ENCODE measurements at regions of chr17 and their contacts with region 1.

Region 1: GRCh38 chr17:74748529-74749365 is at the start of gene NHERF1:
- DNase-seq: peak; percentile 61
- ATAC-seq: peak; percentile 86
- H3K4me3 Mint-ChIP-seq: peak within 1 kb of the TSS; percentile 92
- H3K27ac Mint-ChIP-seq: peak within 1 kb of the TSS; percentile 57
- H3K4me1 Mint-ChIP-seq: peaks cover 64% of the 10 kb centered on the region
- H3K27me3 Mint-ChIP-seq: peaks cover 3% of the 10 kb centered on the region; the same call in 1 of the 2 replicates
- CTCF ChIP-seq: no peak
- total RNA-seq, gene NHERF1: 86.9 to 111 TPM (median 97.1 TPM) in 3 replicates

Region 2: GRCh38 chr17:74566132-74566753 is 182.5 kb before region 1 on chr17:
- CTCF ChIA-PET with region 1: interaction called, 15 read pairs
- POLR2A ChIA-PET with region 1: no interaction called
- DNase-seq: peak; percentile 82
- ATAC-seq: peak; percentile 96
- H3K4me3 Mint-ChIP-seq: no peak overlapping the region
- H3K27ac Mint-ChIP-seq: no peak overlapping the region
- H3K4me1 Mint-ChIP-seq: peaks cover 7% of the 10 kb centered on the region; the same call in 1 of the 2 replicates
- H3K27me3 Mint-ChIP-seq: peaks cover 18% of the 10 kb centered on the region
- CTCF ChIP-seq: peak; percentile 77

Region 3: DNA sequence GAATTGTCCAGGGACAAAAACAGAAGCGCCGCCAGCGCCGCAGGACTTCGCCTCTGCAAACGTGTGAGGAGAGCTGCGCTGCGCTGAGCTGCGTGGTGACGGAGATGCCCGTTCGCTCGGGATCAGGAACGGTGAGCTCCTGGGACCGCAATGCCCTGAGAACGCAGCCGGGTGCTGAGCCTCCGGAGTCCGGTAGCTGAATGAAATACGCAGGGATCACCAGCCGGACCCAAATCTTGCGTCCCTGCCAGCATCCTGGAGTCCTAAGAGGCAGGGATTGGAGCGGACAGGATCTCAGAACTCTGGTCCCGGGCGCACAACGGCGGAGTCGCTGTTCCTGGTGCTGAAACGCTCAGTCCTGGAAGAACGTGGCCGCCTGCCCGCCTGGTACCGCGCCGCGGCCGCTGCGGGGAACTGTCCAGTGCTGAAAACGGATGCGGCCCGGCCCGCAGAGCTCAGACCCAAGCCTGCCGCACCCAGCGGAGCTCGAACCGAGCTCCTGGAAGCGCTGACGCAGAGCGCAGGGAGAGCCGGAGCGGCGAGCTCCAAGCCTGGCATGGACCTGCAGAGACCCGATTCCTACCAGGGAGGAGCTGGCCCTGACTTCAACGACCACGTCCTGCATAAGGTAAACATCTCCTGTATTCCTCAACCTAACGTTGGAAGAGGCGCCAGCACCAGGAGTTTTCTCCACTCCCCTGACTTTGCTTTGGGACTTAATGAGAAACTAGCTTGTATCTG is 77.5 kb before region 1 on chr17:
- CTCF ChIA-PET with region 1: interaction called, 17 read pairs
- POLR2A ChIA-PET with region 1: interaction called, 3 read pairs
- DNase-seq: peak; percentile 97
- ATAC-seq: peak; percentile 95
- H3K4me3 Mint-ChIP-seq: peak overlapping the region; percentile 28
- H3K27ac Mint-ChIP-seq: no peak overlapping the region
- H3K4me1 Mint-ChIP-seq: peaks cover 5% of the 10 kb centered on the region
- H3K27me3 Mint-ChIP-seq: peaks cover 76% of the 10 kb centered on the region
- CTCF ChIP-seq: no peak

Region 4: DNA sequence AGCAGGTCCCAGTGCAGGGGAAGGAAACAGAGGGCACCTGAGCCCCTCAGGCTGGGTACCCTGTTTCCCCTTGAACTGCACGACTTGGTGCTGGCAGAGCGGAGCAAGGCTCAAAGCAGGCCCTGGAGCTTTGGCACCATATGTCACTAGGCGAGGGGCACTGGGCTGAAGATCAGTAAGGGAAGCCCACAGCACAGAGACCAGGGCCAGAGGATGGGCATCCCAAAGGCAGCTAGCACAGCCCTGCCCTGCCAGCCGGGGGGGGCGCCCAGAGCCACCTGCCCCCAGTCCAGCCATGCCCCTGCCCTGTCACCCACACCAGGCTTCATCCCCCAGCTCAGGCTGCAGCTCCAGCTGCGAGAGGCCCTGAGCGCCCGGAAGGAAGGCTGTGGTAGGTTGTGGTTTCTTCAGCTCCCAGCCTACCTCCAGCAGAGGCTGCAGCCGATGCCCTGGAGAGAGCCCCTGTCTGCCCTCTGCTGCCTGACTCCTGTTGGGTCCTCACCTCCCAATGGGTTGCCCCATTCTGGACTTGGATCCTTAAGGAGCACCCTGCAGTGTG is 10.6 kb after region 1 on chr17:
- CTCF ChIA-PET with region 1: interaction called, 115 read pairs
- POLR2A ChIA-PET with region 1: interaction called, 8 read pairs
- DNase-seq: no peak
- ATAC-seq: no peak
- H3K4me3 Mint-ChIP-seq: no peak overlapping the region
- H3K27ac Mint-ChIP-seq: peak overlapping the region; percentile 89
- H3K4me1 Mint-ChIP-seq: peaks cover 52% of the 10 kb centered on the region
- H3K27me3 Mint-ChIP-seq: no peaks in the 10 kb centered on the region
- CTCF ChIP-seq: no peak

Region 5: DNA sequence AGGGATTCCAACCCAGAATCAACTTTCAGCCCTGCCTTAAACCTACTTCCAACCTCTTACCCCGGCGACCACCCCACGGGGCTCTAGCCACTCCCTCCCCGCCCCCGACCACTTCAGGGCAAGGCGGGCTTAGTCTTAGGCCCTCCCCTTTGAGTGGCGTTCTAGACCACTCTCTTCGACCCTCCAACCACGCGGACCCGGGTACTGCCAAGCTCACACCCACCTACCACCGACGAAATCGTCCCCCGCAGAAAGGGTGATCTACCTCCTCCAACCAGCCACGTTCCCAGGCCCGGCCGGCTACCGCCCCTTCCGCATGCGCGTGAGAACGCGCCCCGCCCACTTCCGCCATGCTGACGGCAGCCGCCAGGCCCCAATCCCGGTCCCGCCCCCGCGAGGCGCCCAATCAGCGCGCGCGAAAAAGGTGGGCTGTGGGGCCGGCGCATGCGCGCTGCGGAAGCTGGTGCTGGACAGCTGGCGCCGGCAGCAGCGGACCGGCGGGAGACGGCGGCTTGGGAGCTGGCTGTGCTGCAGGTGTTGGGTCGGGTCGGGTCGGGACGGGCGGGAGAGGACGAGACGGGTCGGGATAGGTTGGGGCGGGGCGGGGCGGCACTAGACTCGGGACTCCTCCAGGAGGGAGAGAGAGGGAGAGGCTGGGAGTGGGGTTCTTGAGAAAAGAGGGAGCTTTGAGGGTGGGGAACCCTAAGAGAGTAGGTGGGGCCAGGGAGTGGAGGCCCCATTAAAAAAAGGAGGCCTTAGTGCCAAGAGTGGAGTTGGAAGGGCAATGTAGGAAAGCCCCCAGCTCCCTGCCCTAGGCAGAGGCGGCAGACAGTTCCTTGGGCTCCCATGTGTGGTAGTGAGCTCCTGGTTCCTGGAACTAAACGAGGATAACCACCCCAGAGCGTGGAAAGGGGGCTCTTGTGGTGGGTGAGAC is 27.6 kb after region 1 on chr17 and contains the start of gene NAT9:
- CTCF ChIA-PET with region 1: interaction called, 262 read pairs
- POLR2A ChIA-PET with region 1: interaction called, 14 read pairs
- DNase-seq: peak; percentile 99
- ATAC-seq: peak; percentile 96
- H3K4me3 Mint-ChIP-seq: peak within 1 kb of the TSS; percentile 91
- H3K27ac Mint-ChIP-seq: peak within 1 kb of the TSS; percentile 97
- H3K4me1 Mint-ChIP-seq: peaks cover 15% of the 10 kb centered on the region
- H3K27me3 Mint-ChIP-seq: no peaks in the 10 kb centered on the region
- CTCF ChIP-seq: no peak
- total RNA-seq, gene NAT9: 66.0 to 71.2 TPM (median 67.1 TPM) in 3 replicates

Region 6: GRCh38 chr17:74790161-74791054 is 41.7 kb after region 1 on chr17:
- CTCF ChIA-PET with region 1: interaction called, 39 read pairs
- POLR2A ChIA-PET with region 1: no interaction called
- DNase-seq: no peak
- ATAC-seq: no peak
- H3K4me3 Mint-ChIP-seq: no peak overlapping the region
- H3K27ac Mint-ChIP-seq: peak overlapping the region; percentile 80; the same call in 1 of the 2 replicates
- H3K4me1 Mint-ChIP-seq: peaks cover 6% of the 10 kb centered on the region
- H3K27me3 Mint-ChIP-seq: no peaks in the 10 kb centered on the region
- CTCF ChIP-seq: no peak

Region 7: DNA sequence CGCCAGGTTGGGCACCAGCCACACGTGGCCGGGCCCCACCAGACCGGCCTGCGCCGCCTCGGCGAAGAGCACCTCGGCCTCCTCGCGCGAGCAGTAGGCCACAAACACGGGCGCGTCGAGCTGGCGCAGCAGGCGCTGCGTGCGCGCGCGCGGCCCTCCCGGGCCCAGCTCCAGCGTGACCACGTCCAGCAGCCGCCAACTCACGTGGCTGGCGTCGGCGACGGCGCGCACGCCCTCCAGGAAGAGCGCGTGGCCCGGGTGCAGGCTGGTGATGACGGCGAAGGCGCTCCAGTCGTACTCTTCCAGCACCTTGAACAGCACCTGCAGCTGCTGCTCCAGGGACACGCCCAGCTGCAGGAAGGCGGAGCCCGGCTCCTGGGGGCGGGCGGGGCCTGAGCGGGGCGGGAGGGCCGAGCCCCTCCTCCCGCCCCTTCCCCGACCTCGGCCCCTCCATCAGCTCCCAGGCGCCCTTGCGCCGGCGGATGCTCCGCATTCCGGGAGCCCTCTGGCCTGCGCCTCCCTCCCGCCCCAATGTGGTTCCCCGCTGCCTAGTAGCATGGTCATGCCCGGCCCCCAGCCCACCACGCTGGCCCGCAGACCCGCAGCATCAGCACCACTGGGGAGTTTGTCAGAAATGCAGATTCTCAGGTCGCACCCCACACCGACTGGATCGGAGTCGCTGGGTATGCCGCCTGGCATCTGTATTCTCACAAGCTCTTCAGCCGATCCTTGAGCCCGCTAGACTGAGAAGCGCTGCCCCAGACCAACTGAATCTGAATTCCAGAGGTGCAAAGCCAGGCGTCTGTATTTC is 103.7 kb after region 1 on chr17:
- CTCF ChIA-PET with region 1: interaction called, 19 read pairs
- POLR2A ChIA-PET with region 1: no interaction called
- DNase-seq: peak; percentile 89
- ATAC-seq: peak; percentile 90
- H3K4me3 Mint-ChIP-seq: peak overlapping the region; percentile 79
- H3K27ac Mint-ChIP-seq: no peak overlapping the region
- H3K4me1 Mint-ChIP-seq: peaks cover 9% of the 10 kb centered on the region
- H3K27me3 Mint-ChIP-seq: peaks cover 91% of the 10 kb centered on the region
- CTCF ChIP-seq: no peak